Activated CD8-positive, alpha-beta T cell treated with anti-CD3 and anti-CD28 coated beads for 36 hours (primary cell): ENCODE measurements at regions of chr12 and their contacts with region 1.

Region 1: GRCh38 chr12:53031617-53032016 is 18.2 kb upstream of the TNS2 start:
- DNase-seq: no peak
- ATAC-seq: no peak
- H3K4me3 Mint-ChIP-seq: no peak overlapping the region
- H3K27ac Mint-ChIP-seq: no peak overlapping the region
- H3K4me1 Mint-ChIP-seq: peaks cover 13% of the 10 kb centered on the region
- H3K27me3 Mint-ChIP-seq: no peaks in the 10 kb centered on the region
- CTCF ChIP-seq: no peak

Region 2: DNA sequence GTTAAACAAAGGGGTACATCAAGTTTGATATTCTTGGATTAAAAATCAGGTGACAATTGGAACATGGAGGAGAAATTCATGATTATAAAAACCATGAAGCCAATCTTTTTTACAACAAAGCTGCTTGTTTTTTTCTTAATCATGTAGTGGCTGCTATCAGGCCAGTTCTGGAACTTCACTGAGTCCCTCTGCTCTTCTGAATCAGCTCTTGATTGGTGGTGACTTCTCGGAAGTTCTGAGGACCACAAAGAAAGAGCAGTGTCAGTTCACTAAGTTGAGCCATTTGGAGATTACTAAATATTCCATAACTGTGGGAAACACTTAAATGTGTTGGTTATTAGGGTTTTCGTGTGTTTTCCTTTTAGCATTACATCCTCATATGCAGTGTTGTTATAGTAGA is 16.9 kb before region 1 on chr12:
- CTCF ChIA-PET with region 1: interaction called, 5 read pairs
- POLR2A ChIA-PET with region 1: interaction called, 11 read pairs
- intact Hi-C with region 1: no loop called
- DNase-seq: no peak
- ATAC-seq: peak; percentile 30
- H3K4me3 Mint-ChIP-seq: no peak overlapping the region
- H3K27ac Mint-ChIP-seq: peak overlapping the region; percentile 77
- H3K4me1 Mint-ChIP-seq: peaks cover 52% of the 10 kb centered on the region
- H3K27me3 Mint-ChIP-seq: no peaks in the 10 kb centered on the region
- CTCF ChIP-seq: no peak

Region 3: GRCh38 chr12:53047221-53048042 is 15.8 kb after region 1 on chr12:
- CTCF ChIA-PET with region 1: interaction called, 15 read pairs
- POLR2A ChIA-PET with region 1: interaction called, 29 read pairs
- intact Hi-C with region 1: no loop called
- DNase-seq: peak; percentile 64
- ATAC-seq: peak; percentile 80
- H3K4me3 Mint-ChIP-seq: peak overlapping the region; percentile 85
- H3K27ac Mint-ChIP-seq: peak overlapping the region; percentile 27
- H3K4me1 Mint-ChIP-seq: peaks cover 27% of the 10 kb centered on the region
- H3K27me3 Mint-ChIP-seq: no peaks in the 10 kb centered on the region
- CTCF ChIP-seq: peak; percentile 54